Thyroid gland (tissue), 4 donors: ENCODE measurements at regions of chr15 and their contacts with region 1.

Region 1: DNA sequence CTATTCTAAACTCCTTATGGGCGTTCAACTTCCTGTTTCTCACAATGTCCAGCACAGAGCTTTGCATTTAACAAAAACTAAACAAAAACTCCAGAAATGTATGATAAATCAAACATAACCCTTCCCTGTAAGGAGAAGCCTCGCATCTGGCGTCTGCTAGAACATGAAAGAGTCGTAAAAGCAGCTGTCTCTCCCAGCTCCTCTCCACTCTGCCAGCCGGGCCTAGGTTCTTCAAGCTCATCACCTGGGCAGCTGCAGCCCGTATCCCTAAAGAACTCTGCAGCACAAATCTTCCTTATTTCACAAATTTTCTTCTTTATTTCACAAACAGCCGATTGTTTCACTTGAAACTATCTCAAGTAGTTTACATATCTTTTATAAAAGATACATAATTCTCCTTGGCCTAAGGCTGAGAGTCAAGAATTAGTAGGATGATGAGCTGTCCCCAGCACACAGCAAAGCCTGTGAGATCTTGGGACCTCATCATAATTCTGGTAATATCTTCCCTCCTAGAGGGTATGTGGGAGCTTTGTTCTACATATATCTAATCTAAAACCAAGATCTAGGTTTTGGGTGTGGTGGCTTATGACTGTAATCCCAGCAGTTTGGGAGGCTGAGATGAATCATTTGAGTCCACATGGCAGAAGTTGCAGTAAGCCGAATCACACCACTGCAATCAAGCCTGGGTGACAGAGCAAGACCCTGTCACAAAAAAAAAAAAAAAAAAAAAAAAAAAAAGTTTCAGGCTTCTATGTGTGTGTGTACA is 35.3 kb downstream of the ANXA2 start:
- DNase-seq: no peak
- H3K4me3 ChIP-seq: no peak overlapping the region
- H3K27ac ChIP-seq: peak overlapping the region in 2 of 3 donors; percentile 28 to 58
- H3K4me1 ChIP-seq: peaks cover 9 to 27% of the 10 kb centered on the region in 2 donors
- H3K27me3 ChIP-seq: no peaks in the 10 kb centered on the region
- CTCF ChIP-seq: no peak
- POLR2A ChIP-seq: no peak

Region 2: DNA sequence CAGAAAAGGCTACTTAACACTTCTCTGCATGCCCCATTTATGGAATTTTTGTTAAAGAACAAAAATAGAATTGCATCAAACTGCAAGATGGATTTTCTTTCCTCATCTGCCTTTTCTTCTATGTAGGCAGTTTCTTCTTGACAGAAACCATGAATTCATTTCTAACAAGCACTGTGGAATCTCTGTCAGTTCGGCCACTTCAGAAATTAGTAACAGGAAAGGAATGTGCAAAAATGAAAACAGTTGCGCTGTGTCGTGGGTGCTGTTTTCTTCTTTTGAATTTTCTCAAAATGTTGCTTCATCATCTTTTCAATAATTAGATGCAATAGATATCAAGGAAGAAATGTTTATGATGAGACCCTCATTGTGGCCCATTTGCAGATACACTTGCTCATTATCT is 206.8 kb before region 1 on chr15:
- intact Hi-C with region 1: no loop called
- DNase-seq: no peak
- H3K4me3 ChIP-seq: no peak overlapping the region
- H3K27ac ChIP-seq: peak overlapping the region; percentile 68 to 94 (median 82)
- H3K4me1 ChIP-seq: peaks cover 43 to 50% of the 10 kb centered on the region in 2 donors
- H3K27me3 ChIP-seq: no peaks in the 10 kb centered on the region
- CTCF ChIP-seq: no peak
- POLR2A ChIP-seq: no peak

Region 3: DNA sequence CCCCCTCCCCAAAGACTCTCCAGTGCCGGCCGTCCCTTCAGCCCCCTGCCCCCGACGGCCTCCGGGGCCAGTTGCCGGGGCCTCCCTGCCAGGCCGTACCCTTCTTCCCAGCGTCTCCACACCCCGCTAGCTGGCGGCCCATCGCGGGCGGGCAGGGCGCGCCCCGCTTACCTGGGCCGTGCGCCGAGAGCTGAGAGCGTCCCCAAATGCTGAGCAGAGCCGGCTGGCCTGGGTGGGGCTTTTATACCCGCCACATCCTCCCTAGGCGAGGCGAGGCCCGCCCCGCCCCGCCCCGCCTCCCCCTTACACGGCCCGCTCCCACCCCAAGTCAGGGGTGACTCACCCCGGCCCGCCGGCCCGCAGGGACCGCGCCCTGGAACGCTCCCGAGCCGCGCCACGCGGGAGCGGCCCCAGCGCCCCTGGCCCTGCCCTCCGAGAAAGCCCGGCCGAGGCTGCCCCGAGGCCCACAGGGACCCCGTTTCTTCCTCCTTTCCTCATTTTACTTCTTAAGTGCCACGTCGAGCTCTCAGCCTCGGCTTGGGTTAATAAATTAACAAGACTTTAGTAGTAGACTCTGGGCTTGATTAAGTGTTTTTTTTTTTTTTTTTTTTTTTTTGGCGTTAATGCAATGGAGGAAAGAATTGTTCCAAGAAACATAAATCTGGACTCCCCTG is 35.4 kb after region 1 on chr15 and contains the start of gene ANXA2:
- intact Hi-C with region 1: loop called (anchors 5 kb)
- DNase-seq: peak; percentile 83 to 84
- H3K4me3 ChIP-seq: peak within 1 kb of the TSS; percentile 91 to 95 (median 94)
- H3K27ac ChIP-seq: peak within 1 kb of the TSS; percentile 96 to 99 (median 98)
- H3K4me1 ChIP-seq: peaks cover 37 to 38% of the 10 kb centered on the region in 2 donors
- H3K27me3 ChIP-seq: no peaks in the 10 kb centered on the region
- CTCF ChIP-seq: no peak
- POLR2A ChIP-seq: peak; percentile 54 to 94
- total RNA-seq, gene ANXA2: 436 to 796 (median 612) TPM

Region 4: DNA sequence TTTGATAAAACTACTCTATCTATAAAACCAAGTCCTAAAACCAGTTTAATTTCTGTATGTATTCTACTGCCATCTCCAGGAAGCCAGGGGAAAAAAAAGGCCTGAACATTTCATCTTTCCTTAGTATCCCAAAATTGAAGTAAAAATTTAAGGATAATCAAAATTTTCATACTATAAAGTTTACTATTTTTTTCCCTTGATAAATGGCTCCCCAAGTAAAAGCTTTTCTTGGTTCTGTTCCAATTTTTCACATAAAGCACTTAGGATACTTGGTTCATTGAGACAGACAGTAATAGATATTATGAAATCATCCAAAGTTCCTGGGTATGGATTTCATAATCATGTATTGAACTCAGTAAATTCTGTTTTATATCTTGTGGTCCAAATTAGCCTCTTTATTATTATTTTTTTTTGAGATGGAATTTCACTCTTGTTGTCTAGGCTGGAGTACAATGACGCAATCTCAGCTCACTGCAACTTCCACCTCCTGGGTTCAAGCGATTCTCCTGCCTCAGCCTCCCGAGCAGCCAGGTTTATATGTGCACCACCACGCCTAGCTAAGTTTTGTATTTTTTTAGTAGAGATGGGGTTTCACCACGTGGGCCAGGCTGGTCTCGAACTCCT is 81.9 kb after region 1 on chr15:
- intact Hi-C with region 1: loop called (anchors 10 kb)
- DNase-seq: no peak
- H3K4me3 ChIP-seq: no peak overlapping the region
- H3K27ac ChIP-seq: no peak overlapping the region
- H3K4me1 ChIP-seq: no peaks in the 10 kb centered on the region
- H3K27me3 ChIP-seq: no peaks in the 10 kb centered on the region
- CTCF ChIP-seq: peak in 5 of 6 experiments; percentile 11 to 61 (median 52)
- POLR2A ChIP-seq: no peak